HCT116 (cell line): ENCODE measurements at regions of chr14 and their contacts with region 1.

Region 1: DNA sequence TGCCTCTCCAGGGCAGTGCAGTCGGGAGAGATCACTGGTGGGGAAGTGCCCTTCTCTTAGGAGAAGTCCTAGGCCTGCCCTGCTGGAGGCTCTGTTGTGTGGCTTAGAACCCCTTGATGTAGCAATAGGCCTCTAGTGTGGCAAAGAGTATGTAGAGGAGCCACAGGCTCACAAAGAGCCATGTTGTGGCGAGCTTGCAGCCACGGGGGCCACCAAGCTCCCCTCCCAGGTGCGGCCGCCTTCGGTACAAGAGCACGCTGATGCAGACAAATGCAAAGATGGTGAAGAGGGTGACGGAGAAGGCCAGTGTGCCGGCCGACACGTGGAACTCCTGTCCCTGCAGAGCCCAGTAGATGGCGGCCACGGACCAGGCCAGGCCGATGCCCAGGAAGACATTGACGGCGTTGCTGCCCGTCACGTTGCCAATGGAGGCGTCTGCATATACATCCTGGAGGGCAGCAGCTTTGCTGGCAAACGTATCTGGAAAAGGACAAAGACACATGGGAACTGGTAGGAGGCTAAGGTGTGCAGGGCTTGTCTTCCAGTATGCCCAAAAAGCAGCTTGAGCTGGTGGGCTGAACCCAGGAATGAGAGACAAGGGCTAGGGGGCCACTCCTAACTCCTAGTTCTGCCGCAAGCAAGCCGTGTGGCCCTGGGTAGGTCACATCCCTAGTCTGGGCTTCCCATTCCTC is 142.8 kb downstream of the SLC8A3 start:
- DNase-seq: peak; percentile 54
- ATAC-seq: peak; percentile 99
- H3K4me3 ChIP-seq: no peak overlapping the region
- H3K27ac ChIP-seq: no peak overlapping the region
- H3K4me1 ChIP-seq: peaks cover 0 to 7% of the 10 kb centered on the region in 2 experiments; a peak in 1 of 4 replicates
- H3K27me3 ChIP-seq: peaks cover 19% of the 10 kb centered on the region
- CTCF ChIP-seq: peak; percentile 70 to 82 (median 82)
- POLR2A ChIP-seq: no peak
- RAD21 ChIP-seq: peak; percentile 92

Region 2: GRCh38 chr14:70073924-70074566 is 28.1 kb after region 1 on chr14:
- CTCF ChIA-PET with region 1: interaction called, 35 read pairs
- POLR2A ChIA-PET with region 1: no interaction called
- RAD21 ChIA-PET with region 1: interaction called in 1 of 2 experiments, 3 read pairs
- intact Hi-C with region 1: loop called (anchors 1 kb)
- DNase-seq: peak; percentile 64
- ATAC-seq: peak; percentile 99
- H3K4me3 ChIP-seq: no peak overlapping the region
- H3K27ac ChIP-seq: no peak overlapping the region
- H3K4me1 ChIP-seq: no peaks in the 10 kb centered on the region
- H3K27me3 ChIP-seq: peaks cover 35% of the 10 kb centered on the region
- CTCF ChIP-seq: peak; percentile 79 to 98 (median 96)
- POLR2A ChIP-seq: no peak
- RAD21 ChIP-seq: peak; percentile 76

Region 3: GRCh38 chr14:70257531-70257930 is 211.5 kb after region 1 on chr14:
- CTCF ChIA-PET with region 1: no interaction called
- POLR2A ChIA-PET with region 1: no interaction called
- RAD21 ChIA-PET with region 1: no interaction called
- intact Hi-C with region 1: loop called (anchors 2 kb)
- DNase-seq: peak; percentile 60
- ATAC-seq: peak; percentile 93
- H3K4me3 ChIP-seq: no peak overlapping the region
- H3K27ac ChIP-seq: no peak overlapping the region
- H3K4me1 ChIP-seq: peaks cover 0 to 4% of the 10 kb centered on the region in 2 experiments; a peak in 1 of 4 replicates
- H3K27me3 ChIP-seq: no peaks in the 10 kb centered on the region
- CTCF ChIP-seq: peak; percentile 37 to 85 (median 83); a peak in 5 of 6 replicates
- POLR2A ChIP-seq: no peak
- RAD21 ChIP-seq: peak; percentile 55

Region 4: GRCh38 chr14:70317969-70318634 is 272.1 kb after region 1 on chr14:
- CTCF ChIA-PET with region 1: no interaction called
- POLR2A ChIA-PET with region 1: no interaction called
- RAD21 ChIA-PET with region 1: no interaction called
- intact Hi-C with region 1: loop called (anchors 2 kb)
- DNase-seq: peak; percentile 38
- ATAC-seq: peak; percentile 87
- H3K4me3 ChIP-seq: no peak overlapping the region
- H3K27ac ChIP-seq: no peak overlapping the region
- H3K4me1 ChIP-seq: no peaks in the 10 kb centered on the region
- H3K27me3 ChIP-seq: no peaks in the 10 kb centered on the region
- CTCF ChIP-seq: peak; percentile 45 to 62 (median 51); a peak in 5 of 6 replicates
- POLR2A ChIP-seq: no peak
- RAD21 ChIP-seq: peak; percentile 73

Region 5: GRCh38 chr14:70567791-70568190 is 521.8 kb after region 1 on chr14:
- CTCF ChIA-PET with region 1: no interaction called
- POLR2A ChIA-PET with region 1: no interaction called
- RAD21 ChIA-PET with region 1: no interaction called
- intact Hi-C with region 1: loop called (anchors 2 kb)
- DNase-seq: peak; percentile 28
- ATAC-seq: peak; percentile 91
- H3K4me3 ChIP-seq: no peak overlapping the region
- H3K27ac ChIP-seq: no peak overlapping the region
- H3K4me1 ChIP-seq: no peaks in the 10 kb centered on the region
- H3K27me3 ChIP-seq: no peaks in the 10 kb centered on the region
- CTCF ChIP-seq: peak; percentile 19 to 76 (median 72); a peak in 5 of 6 replicates
- POLR2A ChIP-seq: no peak
- RAD21 ChIP-seq: peak; percentile 61